ENCODE measurements at regions of chr3 and their contacts with region 1.

Region 1: GRCh38 chr3:58471025-58471887 is 20.6 kb upstream of the KCTD6 start:
- DNase-seq: peak; percentile 82 to 98
- H3K4me3 ChIP-seq: peak overlapping the region; percentile 20; the same call in 1 of the 2 replicates
- H3K27ac ChIP-seq: peak overlapping the region; percentile 83
- H3K4me1 ChIP-seq: peaks cover 78% of the 10 kb centered on the region
- H3K27me3 ChIP-seq: no peaks in the 10 kb centered on the region
- CTCF ChIP-seq: no peak

Region 2: DNA sequence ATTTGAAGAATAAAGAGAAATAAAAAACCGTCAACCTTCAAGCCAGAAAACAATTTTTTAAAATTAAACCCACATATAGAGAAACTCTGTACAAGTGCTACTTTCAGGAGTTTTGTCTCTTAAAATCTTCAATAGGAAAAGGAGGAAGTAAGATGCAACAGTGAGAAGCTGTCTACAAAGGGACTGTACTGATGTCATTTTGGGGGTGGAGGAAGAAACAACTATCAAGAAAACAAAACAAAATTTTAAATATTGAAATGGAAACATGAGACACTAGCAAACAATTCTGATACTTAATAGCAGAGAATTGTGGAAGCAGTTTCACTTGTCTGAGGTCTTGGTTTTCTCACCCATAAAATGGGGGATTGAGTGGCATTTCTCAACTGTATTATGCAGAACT is 630.8 kb before region 1 on chr3:
- CTCF ChIA-PET with region 1: interaction called, 12 read pairs
- POLR2A ChIA-PET with region 1: no interaction called
- intact Hi-C with region 1: no loop called
- DNase-seq: no peak
- H3K4me3 ChIP-seq: no peak overlapping the region
- H3K27ac ChIP-seq: peak overlapping the region; percentile 50
- H3K4me1 ChIP-seq: no peaks in the 10 kb centered on the region
- H3K27me3 ChIP-seq: no peaks in the 10 kb centered on the region
- CTCF ChIP-seq: no peak

Region 3: DNA sequence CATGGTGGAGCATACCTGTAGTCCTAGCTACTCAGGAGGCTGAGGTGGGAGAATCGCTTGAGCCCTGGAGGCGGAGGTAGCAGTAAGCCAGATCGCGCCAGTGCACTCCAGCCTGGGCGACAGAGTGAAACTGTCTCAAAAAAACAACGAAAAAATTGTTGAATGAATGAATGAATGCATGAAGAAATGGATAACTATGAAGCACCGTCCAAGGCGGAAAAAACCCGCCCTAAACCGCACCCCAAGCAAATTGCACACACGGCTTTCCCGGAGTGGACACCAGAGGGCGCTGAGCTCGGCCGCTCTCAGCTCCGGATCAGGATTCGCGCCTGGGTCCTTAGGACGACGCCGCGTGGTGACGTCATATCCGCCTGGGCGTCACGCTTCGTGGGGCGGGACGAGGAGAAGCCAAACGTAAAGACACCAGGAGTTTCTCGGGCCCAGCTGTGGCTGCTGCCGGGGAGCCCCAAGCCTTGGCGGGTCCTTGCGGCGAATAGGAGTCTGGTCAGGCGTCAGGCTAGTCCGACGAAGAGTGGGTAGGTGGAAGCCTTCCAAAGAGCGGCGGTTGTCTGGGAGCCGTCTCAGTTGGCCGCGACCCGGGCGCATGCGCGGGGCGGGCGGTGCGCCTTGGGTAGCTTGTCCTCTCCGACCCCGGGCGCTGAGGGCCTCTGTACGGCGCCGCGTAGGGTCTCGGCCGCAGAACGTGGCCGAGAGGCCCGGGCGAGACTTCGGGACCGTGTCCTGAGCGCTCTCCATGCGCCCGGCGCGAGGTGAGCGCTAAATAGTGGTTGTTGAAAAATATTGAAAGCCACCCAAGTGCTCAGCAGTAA is 165.2 kb before region 1 on chr3 and contains the starts of genes HTD2 and RPP14:
- CTCF ChIA-PET with region 1: no interaction called
- POLR2A ChIA-PET with region 1: no interaction called
- intact Hi-C with region 1: loop called (anchors 5 kb)
- DNase-seq: peak; percentile 86 to 95
- H3K4me3 ChIP-seq: peak within 1 kb of the TSS; percentile 91
- H3K27ac ChIP-seq: peak within 1 kb of the TSS; percentile 79
- H3K4me1 ChIP-seq: peaks cover 12% of the 10 kb centered on the region
- H3K27me3 ChIP-seq: no peaks in the 10 kb centered on the region
- CTCF ChIP-seq: peak; percentile 85
- total RNA-seq, gene HTD2: 6.2 and 7.4 TPM in 2 replicates
- total RNA-seq, gene RPP14: 13.2 and 13.8 TPM in 2 replicates

Region 4: DNA sequence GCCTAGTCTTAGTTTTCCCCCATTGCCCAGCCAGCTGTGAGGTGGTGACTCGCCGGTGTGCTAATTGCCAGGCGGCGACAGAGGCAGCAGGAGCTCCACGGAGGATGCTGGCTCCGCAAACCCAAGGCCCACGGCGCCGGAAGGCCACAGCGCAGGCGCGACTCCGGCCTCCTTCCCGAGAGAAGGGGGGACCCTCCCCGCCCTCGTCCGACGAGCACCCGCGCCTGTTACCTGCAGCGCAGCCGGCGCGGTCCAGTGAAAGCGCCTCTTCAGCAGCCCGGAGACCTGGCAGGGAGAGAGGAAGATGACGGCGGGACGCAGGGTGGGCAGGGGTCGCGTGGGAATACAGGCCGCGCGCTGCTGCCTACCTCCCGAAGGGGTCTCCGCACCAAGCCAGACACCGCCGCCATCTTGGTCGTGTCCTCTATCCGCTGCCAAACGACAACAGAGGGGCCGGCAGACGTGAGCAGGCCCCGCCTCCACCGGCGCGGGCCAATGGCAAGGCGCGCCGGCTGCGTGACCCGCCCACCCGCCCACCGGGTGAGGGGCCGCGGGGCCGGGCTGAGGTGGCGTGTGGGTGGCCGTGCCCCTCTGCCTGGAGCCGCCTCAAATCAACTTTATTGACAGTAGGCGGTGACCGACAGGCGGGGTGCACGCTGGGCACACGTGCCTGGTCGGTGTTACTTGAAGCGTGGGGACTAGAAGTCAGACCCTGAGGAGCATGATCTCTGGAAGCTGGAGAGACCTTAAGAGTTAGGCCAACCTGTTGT is 37.7 kb before region 1 on chr3 and contains the start of gene PDHB:
- CTCF ChIA-PET with region 1: no interaction called
- POLR2A ChIA-PET with region 1: no interaction called
- intact Hi-C with region 1: loop called (anchors 5 kb)
- DNase-seq: peak; percentile 67 to 87
- H3K4me3 ChIP-seq: peak within 1 kb of the TSS; percentile 84
- H3K27ac ChIP-seq: no peak within 1 kb of the TSS
- H3K4me1 ChIP-seq: peaks cover 13% of the 10 kb centered on the region
- H3K27me3 ChIP-seq: no peaks in the 10 kb centered on the region
- CTCF ChIP-seq: no peak; the same call in 1 of the 2 replicates
- total RNA-seq, gene PDHB: 69.8 and 70.7 TPM in 2 replicates

Region 5: GRCh38 chr3:58491506-58492402 is 20.5 kb after region 1 on chr3 and contains the start of gene KCTD6:
- CTCF ChIA-PET with region 1: interaction called, 13 read pairs
- POLR2A ChIA-PET with region 1: no interaction called
- intact Hi-C with region 1: loop called (anchors 1 kb)
- DNase-seq: peak; percentile 82 to 96
- H3K4me3 ChIP-seq: peak within 1 kb of the TSS; percentile 96
- H3K27ac ChIP-seq: peak within 1 kb of the TSS; percentile 1; the same call in 1 of the 2 replicates
- H3K4me1 ChIP-seq: peaks cover 58% of the 10 kb centered on the region
- H3K27me3 ChIP-seq: no peaks in the 10 kb centered on the region
- CTCF ChIP-seq: peak; percentile 56
- total RNA-seq, gene KCTD6: 7.8 and 10.3 TPM in 2 replicates

Region 6: GRCh38 chr3:58526515-58526957 is 55.3 kb after region 1 on chr3:
- CTCF ChIA-PET with region 1: no interaction called
- POLR2A ChIA-PET with region 1: no interaction called
- intact Hi-C with region 1: loop called (anchors 1 kb)
- DNase-seq: peak; percentile 54 to 87
- H3K4me3 ChIP-seq: no peak overlapping the region
- H3K27ac ChIP-seq: no peak overlapping the region
- H3K4me1 ChIP-seq: peaks cover 29% of the 10 kb centered on the region
- H3K27me3 ChIP-seq: no peaks in the 10 kb centered on the region
- CTCF ChIP-seq: no peak

Measured in PC-9 (cell line).